Sigmoid colon (tissue), 7 donors: ENCODE measurements at regions of chr18 and their contacts with region 1.

Region 1: GRCh38 chr18:72762515-72763122 is 105.2 kb downstream of the NETO1 start:
- DNase-seq: no peak
- H3K4me3 ChIP-seq: no peak overlapping the region
- H3K27ac ChIP-seq: no peak overlapping the region
- H3K4me1 ChIP-seq: no peaks in the 10 kb centered on the region
- H3K27me3 ChIP-seq: no peaks in the 10 kb centered on the region
- CTCF ChIP-seq: peak in 3 of 4 experiments; percentile 37 to 65 (median 53)
- EP300 ChIP-seq: no peak
- POLR2A ChIP-seq: no peak

Region 2: DNA sequence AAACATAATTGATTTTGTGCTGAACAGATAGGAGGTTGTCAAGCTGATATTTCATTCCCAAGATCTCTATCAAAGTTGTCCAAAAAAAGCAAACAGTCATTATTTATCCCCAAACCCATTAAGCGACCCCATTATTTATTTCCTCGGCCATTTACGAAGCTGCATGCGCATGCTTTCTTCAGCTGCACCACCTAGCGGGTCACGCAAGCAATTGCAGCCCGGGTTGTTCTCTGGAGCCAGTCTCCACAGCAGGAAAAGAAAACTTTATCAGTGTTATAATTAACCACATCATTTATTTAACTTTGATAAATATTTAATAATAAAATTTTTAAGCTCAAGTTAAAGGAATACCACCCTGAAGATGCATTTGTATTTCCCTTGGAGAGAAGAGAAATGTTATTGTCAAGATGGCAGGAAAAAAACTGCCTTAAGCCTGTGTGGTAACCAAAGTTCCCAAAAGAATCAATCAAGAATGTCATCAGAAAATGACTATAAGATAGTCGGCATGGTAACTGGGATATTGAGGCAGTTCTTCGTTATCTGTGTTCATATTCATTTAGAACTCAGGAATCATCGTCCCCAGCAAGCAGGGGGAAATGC is 1080.3 kb after region 1 on chr18:
- intact Hi-C with region 1: loop called (anchors 5 kb)
- DNase-seq: no peak
- H3K4me3 ChIP-seq: no peak overlapping the region
- H3K27ac ChIP-seq: no peak overlapping the region
- H3K4me1 ChIP-seq: no peaks in the 10 kb centered on the region
- H3K27me3 ChIP-seq: peaks cover 0 to 14% (median 0%) of the 10 kb centered on the region in 3 donors
- CTCF ChIP-seq: peak in 3 of 4 experiments; percentile 43 to 84 (median 62)
- EP300 ChIP-seq: no peak
- POLR2A ChIP-seq: no peak